Right cardiac atrium (tissue), 5 donors: ENCODE measurements at regions of chr2 and their contacts with region 1.

Region 1: DNA sequence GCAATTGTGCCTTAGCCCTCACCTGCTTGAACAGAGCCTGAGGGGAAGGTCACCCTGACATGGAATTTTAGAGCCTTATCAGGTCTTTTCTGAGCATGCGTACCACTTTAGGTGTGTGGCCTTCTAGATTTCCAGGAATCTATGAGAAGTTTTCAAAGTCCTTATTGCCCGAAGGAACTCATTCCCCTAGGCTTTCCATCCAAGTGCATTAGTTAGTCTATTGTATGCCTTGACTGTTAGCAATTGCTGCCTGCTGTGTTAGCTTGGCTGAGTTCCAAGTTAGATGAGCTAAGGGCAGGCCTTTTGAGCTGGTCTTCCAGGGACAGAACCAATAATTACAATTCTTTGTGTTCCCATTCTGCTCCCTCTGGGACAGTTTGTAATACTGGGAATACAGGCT is 30.8 kb upstream of the PUM2 start:
- DNase-seq: peak in 1 of 3 donors; percentile 20
- ATAC-seq: peak; percentile 40 to 54
- H3K4me3 ChIP-seq: no peak overlapping the region
- H3K27ac ChIP-seq: no peak overlapping the region
- H3K4me1 ChIP-seq: peaks cover 4% of the 10 kb centered on the region
- H3K27me3 ChIP-seq: no peaks in the 10 kb centered on the region

Region 2: GRCh38 chr2:20642055-20642971 is 260.9 kb after region 1 on chr2:
- intact Hi-C with region 1: loop called in 1 of 4 experiments (anchors 5 kb)
- DNase-seq: peak; percentile 79 to 93 (median 91)
- ATAC-seq: peak; percentile 86
- H3K4me3 ChIP-seq: no peak overlapping the region
- H3K27ac ChIP-seq: no peak overlapping the region
- H3K4me1 ChIP-seq: peaks cover 3% of the 10 kb centered on the region
- H3K27me3 ChIP-seq: no peaks in the 10 kb centered on the region